ENCODE measurements at regions of chr15 and their contacts with region 1.

Region 1: GRCh38 chr15:39171944-39172368 is 408.9 kb upstream of the THBS1 start:
- ATAC-seq: peak; percentile 65 to 100 (median 93)
- H3K4me3 ChIP-seq: no peak overlapping the region
- H3K27ac ChIP-seq: no peak overlapping the region
- H3K4me1 ChIP-seq: peaks cover 7 to 15% of the 10 kb centered on the region in 2 donors

Region 2: GRCh38 chr15:39747326-39747725 is 575.4 kb after region 1 on chr15:
- in situ Hi-C with region 1: loop called in 1 of 9 experiments (anchors 25 kb)
- ATAC-seq: peak in 2 of 8 experiments; percentile 38 to 71
- H3K4me3 ChIP-seq: no peak overlapping the region
- H3K27ac ChIP-seq: no peak overlapping the region
- H3K4me1 ChIP-seq: no peaks in the 10 kb centered on the region

Measured in motor neuron (in vitro differentiated cells).